ENCODE measurements at regions of chr5 and their contacts with region 1.

Region 1: DNA sequence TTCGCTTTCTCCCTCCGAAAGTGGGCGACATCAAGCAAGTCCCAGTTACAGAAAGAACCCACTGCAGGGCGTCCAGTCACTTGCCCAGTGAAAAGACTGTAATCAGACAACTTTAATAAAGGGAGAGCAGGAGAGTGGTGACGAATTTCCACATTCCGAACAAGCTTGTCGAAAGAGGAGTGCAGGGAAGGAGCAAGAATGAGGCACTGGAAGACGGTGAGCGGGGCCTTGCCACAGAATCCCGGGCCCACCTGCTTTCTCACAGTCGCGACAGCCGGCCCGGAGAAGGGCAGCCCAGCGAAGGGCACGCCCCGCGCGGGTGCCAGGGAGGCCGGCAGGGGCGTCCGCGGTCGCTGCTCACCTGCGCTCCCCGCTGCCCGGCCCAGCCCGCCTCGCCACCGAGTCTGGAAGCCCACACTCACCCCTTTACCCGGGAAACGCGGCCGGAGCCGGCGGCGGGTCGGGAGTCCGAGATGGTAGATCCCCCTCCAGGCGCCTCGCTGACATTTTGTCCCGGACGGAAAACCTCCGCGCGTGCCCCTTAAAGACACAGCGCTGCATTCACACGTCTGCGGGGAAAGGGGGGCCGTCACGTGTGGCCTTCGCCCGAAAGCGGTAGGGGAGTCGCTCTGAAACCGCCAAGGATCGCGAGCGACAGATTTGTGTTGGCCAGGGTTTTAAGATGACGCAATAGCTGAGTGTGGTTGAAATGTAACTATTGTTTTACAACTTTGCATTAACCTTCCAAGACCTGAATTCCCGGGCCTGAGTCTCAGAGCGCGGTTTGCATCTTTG is at the start of gene ZBED3:
- DNase-seq: peak; percentile 82
- ATAC-seq: peak; percentile 83
- total RNA-seq, gene ZBED3: 6.5 TPM

Region 2: DNA sequence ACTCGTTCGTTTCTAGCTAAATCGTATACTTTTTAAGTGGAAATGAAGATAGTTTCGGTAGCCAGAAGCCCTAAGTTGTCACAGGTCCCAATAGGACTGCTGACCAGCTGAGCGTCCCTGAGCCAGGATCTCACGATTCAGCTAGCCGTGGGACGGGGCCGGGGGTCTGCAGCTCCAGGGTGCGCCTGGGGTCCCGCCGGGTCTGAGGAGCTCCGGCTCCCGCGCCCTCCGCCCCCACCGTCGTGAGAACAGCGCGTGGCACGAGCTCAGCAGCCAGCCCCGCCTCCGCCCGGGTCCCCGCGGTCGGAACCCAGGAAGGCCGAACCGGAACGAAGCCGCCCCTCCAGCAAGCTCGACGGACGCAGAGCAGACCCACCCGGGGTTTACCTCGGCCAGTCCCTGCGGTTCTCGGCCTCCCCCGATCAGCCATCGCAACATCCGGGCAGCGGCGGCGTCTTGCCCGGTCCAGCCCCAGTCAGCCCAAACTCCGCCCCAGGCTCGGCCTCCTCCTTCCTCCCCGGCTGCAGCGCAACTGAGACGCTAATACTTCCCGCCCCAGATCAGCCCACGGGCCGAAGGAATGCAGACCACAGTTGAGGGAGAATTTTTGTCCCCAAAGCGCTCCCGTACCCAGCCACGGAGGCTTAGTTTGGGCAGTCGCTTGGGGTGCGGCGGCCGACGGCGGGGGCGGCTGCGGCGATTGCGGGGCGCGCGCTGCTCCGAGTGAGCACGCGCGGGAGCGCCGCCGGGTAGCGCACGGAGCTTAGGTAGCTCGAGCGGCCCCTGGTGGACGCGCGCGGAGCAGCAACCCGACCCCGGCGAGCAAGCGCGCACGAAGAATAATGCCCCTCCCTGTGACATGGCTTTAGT is 405.1 kb after region 1 on chr5 and contains the start of gene WDR41:
- intact Hi-C with region 1: loop called (anchors 5 kb)
- DNase-seq: peak; percentile 97
- ATAC-seq: peak; percentile 97
- total RNA-seq, gene WDR41: 28.3 TPM

Measured in Right ventricle myocardium inferior (tissue), 1 donor.